CD8-positive, alpha-beta memory T cell (primary cell): ENCODE measurements at regions of chr1 and their contacts with region 1.

Region 1: GRCh38 chr1:147242439-147243227 is at the start of gene CHD1L:
- DNase-seq: peak; percentile 87 to 93 (median 89)
- H3K4me3 ChIP-seq: peak within 1 kb of the TSS; percentile 94
- H3K4me3 Mint-ChIP-seq: peak within 1 kb of the TSS; percentile 93 to 99 (median 95)
- H3K27ac ChIP-seq: peak within 1 kb of the TSS; percentile 73
- H3K27ac Mint-ChIP-seq: peak within 1 kb of the TSS; percentile 12 to 93 (median 84)
- H3K4me1 ChIP-seq: peaks cover 20% of the 10 kb centered on the region
- H3K4me1 Mint-ChIP-seq: peaks cover 36 to 47% (median 46%) of the 10 kb centered on the region in 3 donors
- H3K27me3 ChIP-seq: no peaks in the 10 kb centered on the region
- H3K27me3 Mint-ChIP-seq: peaks cover 3 to 4% of the 10 kb centered on the region in 2 donors
- total RNA-seq, gene CHD1L: 51.2 to 52.8 TPM

Region 2: GRCh38 chr1:147172168-147172992 is 70.3 kb before region 1 on chr1 and contains the start of gene PRKAB2:
- CTCF ChIA-PET with region 1: interaction called, 52 read pairs
- POLR2A ChIA-PET with region 1: interaction called, 14 read pairs
- DNase-seq: peak; percentile 75 to 89 (median 84)
- H3K4me3 ChIP-seq: peak within 1 kb of the TSS; percentile 90
- H3K4me3 Mint-ChIP-seq: peak within 1 kb of the TSS; percentile 96 to 100 (median 99)
- H3K27ac ChIP-seq: peak within 1 kb of the TSS; percentile 71
- H3K27ac Mint-ChIP-seq: peak within 1 kb of the TSS; percentile 95 to 100 (median 98)
- H3K4me1 ChIP-seq: peaks cover 27% of the 10 kb centered on the region
- H3K4me1 Mint-ChIP-seq: peaks cover 33 to 57% (median 56%) of the 10 kb centered on the region in 3 donors
- H3K27me3 ChIP-seq: no peaks in the 10 kb centered on the region
- H3K27me3 Mint-ChIP-seq: no peaks in the 10 kb centered on the region
- total RNA-seq, gene PRKAB2: 7.3 to 8.5 TPM

Region 3: DNA sequence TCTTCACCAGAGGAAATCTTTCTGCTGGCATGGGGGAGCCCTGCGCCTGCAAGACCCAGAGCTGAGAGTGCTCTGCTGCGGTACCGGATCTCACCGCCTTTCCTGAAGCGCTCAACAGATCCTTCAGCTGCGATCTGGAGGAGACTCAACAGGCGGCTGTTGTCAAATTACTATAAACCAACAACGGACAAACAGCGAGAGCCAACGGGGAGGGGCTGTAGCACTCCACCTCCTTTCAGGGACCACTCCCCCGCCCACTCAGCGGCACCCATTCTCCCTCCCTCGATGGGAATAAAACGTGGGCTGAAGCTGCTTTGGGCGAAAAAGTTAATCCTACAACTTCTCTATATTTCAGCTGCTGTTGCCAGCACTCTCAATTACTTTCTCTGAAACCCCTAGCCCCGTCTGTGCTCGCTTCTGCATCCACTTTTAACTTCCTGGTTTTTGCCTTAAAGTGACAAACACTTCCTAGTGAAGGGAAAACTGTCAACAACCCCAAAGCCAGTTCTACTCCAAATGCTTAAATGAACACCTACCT is 17.4 kb before region 1 on chr1 and contains the start of gene FMO5:
- CTCF ChIA-PET with region 1: interaction called, 21 read pairs
- POLR2A ChIA-PET with region 1: interaction called, 3 read pairs
- DNase-seq: peak; percentile 36 to 61 (median 44)
- H3K4me3 ChIP-seq: peak within 1 kb of the TSS; percentile 75
- H3K4me3 Mint-ChIP-seq: peak within 1 kb of the TSS; percentile 93 to 97 (median 95)
- H3K27ac ChIP-seq: peak within 1 kb of the TSS; percentile 28
- H3K27ac Mint-ChIP-seq: peak within 1 kb of the TSS in 7 of 8 donors; percentile 81 to 97 (median 91)
- H3K4me1 ChIP-seq: peaks cover 5% of the 10 kb centered on the region
- H3K4me1 Mint-ChIP-seq: peaks cover 18 to 22% (median 21%) of the 10 kb centered on the region in 3 donors
- H3K27me3 ChIP-seq: no peaks in the 10 kb centered on the region
- H3K27me3 Mint-ChIP-seq: no peaks in the 10 kb centered on the region
- total RNA-seq, gene FMO5: 0.31 to 0.35 TPM

Region 4: GRCh38 chr1:147389532-147390524 is 147.2 kb after region 1 on chr1:
- CTCF ChIA-PET with region 1: no interaction called
- POLR2A ChIA-PET with region 1: no interaction called
- DNase-seq: peak in 2 of 5 donors; percentile 6 to 10
- H3K4me3 ChIP-seq: no peak overlapping the region
- H3K4me3 Mint-ChIP-seq: no peak overlapping the region
- H3K27ac ChIP-seq: no peak overlapping the region
- H3K27ac Mint-ChIP-seq: no peak overlapping the region
- H3K4me1 ChIP-seq: no peaks in the 10 kb centered on the region
- H3K4me1 Mint-ChIP-seq: no peaks in the 10 kb centered on the region
- H3K27me3 ChIP-seq: peaks cover 6% of the 10 kb centered on the region
- H3K27me3 Mint-ChIP-seq: peaks cover 12 to 27% of the 10 kb centered on the region in 2 donors